Posterior cingulate gyrus (tissue), 11 donors: ENCODE measurements at regions of chr10 and their contacts with region 1.

Region 1: GRCh38 chr10:34666008-34666705 is 148.9 kb downstream of the PARD3 start:
- DNase-seq: no peak

Region 2: DNA sequence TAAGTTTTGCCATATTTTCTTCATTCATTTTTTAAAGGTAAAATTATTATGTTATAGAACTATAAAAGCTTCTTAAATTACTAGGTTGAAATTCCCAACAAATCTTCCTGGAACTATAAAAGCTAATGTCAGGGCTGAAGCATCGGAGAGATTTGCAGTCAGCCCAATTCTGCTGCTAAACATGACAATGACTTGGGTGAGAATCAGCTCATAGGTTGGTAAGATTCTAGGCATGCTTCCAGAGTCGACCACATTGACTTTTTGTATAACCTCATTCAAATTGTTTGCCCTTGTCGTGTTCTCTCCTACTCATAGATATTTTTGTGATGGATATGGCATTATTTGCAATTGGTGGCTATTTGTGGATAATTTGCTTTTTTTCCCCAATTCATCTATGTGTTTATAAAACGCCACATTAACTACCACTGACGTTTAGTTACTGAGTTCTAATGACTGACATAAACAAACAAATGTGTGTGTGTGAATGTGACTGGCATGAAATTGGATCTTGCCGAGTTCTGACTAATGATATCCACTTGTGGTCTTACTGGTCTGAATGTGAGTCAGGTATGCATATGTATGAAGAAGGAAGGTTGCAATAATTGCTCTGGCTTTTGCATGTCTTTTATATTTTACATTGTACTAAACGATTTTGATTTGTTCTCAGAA is 430.9 kb before region 1 on chr10:
- intact Hi-C with region 1: no loop called
- DNase-seq: no peak

Region 3: DNA sequence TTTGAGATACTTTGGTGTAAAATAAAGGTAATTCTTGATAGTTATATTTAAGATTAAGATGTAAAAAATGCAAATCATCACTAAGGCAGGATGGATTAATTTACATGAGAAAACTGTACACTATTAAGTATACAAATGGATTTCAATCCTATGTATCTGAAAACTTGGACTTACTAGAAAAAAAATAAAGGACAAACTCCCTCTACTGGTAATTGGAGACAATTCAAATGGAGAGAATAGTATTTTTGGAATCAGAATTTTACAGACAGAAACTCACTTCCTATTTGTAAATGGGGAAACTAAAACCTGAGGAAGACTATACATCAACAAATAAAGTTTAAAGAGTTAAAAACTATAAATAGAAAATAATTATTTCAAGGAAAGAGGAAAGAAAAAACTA is 361.4 kb after region 1 on chr10:
- intact Hi-C with region 1: loop called (anchors 5 kb)
- DNase-seq: no peak